Dendritic cell treated with granulocyte-macrophage colony-stimulating factor and Interleukin-4, amounts not matched to agents 40 ng/mL and 50 ng/mL, for 4 days (primary cell): ENCODE measurements at regions of chr11 and their contacts with region 1.

Region 1: GRCh38 chr11:73288873-73289707 is 17.0 kb downstream of the P2RY6 start:
- H3K4me3 Mint-ChIP-seq: peak overlapping the region; percentile 61
- H3K27ac Mint-ChIP-seq: peak overlapping the region; percentile 92
- H3K4me1 Mint-ChIP-seq: peaks cover 94% of the 10 kb centered on the region
- H3K27me3 Mint-ChIP-seq: peaks cover 3% of the 10 kb centered on the region

Region 2: GRCh38 chr11:73184953-73185671 is 104.0 kb before region 1 on chr11:
- intact Hi-C with region 1: loop called (anchors 2 kb)
- H3K4me3 Mint-ChIP-seq: peak overlapping the region; percentile 60
- H3K27ac Mint-ChIP-seq: peak overlapping the region; percentile 63
- H3K4me1 Mint-ChIP-seq: peaks cover 57% of the 10 kb centered on the region
- H3K27me3 Mint-ChIP-seq: peaks cover 1% of the 10 kb centered on the region

Region 3: DNA sequence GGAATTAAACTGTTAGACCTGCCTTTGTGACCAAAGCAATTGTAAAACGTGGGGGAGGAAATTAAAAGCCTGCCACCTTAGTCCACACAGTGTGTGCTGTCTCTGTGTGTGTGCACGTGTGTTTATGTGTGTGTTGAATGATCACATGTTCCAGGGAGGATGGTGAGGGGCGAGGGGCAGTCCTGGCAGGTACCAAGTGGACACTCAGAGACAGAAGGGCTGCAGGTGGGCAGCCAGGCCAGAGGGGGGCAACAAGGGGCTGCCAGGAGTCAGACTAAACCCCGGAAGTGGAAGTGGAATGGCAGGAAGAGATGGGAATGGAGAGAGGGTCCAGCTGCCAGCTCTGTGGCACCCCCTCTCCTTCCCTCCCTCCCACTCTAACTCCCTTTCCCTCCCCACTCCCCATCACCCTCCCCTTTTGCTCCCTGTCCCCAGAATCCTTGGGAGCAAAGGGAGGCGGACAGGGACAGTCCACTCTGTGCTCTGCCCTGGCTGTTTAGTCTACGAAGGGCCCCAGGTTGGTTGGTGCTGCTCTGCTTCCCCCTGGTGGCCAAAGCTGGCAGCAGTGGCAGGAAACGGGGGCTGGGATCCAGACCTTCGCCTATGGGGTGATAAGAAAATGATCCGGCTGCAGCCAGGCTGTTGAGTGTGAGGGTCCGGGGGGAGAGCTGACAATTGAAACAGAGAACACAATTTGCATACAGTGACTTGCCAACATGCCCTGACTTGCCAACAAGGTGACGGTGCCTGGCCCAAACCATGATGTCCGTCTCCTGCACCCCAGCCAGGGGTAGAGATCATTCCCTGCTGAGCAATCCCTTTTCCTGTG is 46.6 kb before region 1 on chr11:
- intact Hi-C with region 1: loop called (anchors 1 kb)
- H3K4me3 Mint-ChIP-seq: peak overlapping the region; percentile 30
- H3K27ac Mint-ChIP-seq: peak overlapping the region; percentile 65
- H3K4me1 Mint-ChIP-seq: peaks cover 47% of the 10 kb centered on the region
- H3K27me3 Mint-ChIP-seq: no peaks in the 10 kb centered on the region

Region 4: GRCh38 chr11:73271936-73272719 is 17.0 kb before region 1 on chr11 and contains the start of gene P2RY6:
- intact Hi-C with region 1: loop called (anchors 2 kb)
- H3K4me3 Mint-ChIP-seq: peak within 1 kb of the TSS; percentile 86
- H3K27ac Mint-ChIP-seq: peak within 1 kb of the TSS; percentile 91
- H3K4me1 Mint-ChIP-seq: peaks cover 95% of the 10 kb centered on the region
- H3K27me3 Mint-ChIP-seq: peaks cover 14% of the 10 kb centered on the region

Region 5: DNA sequence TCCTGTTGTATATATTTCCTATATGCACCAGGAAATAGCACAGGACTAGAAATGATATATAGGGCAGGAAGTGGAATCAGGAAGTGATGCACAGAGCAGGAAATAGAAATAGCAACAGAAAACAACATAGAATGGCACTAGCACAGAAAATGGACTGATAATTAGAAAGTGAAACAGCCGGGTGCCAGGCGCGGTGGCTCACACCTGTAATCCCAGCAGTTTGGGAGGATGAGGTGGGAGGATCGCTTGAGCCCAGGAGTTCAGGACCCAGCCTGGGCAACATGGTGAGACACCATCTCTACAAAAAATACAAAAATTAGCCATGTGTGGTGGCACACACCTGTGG is 77.1 kb after region 1 on chr11:
- intact Hi-C with region 1: no loop called
- H3K4me3 Mint-ChIP-seq: no peak overlapping the region
- H3K27ac Mint-ChIP-seq: no peak overlapping the region
- H3K4me1 Mint-ChIP-seq: peaks cover 21% of the 10 kb centered on the region
- H3K27me3 Mint-ChIP-seq: peaks cover 3% of the 10 kb centered on the region